Activated CD8-positive, alpha-beta T cell treated with anti-CD3 and anti-CD28 coated beads, Interleukin-2, amount 10 ng/mL, durations not matched to agents 7 days and 5 days (primary cell): ENCODE measurements at regions of chr17 and their contacts with region 1.

Region 1: DNA sequence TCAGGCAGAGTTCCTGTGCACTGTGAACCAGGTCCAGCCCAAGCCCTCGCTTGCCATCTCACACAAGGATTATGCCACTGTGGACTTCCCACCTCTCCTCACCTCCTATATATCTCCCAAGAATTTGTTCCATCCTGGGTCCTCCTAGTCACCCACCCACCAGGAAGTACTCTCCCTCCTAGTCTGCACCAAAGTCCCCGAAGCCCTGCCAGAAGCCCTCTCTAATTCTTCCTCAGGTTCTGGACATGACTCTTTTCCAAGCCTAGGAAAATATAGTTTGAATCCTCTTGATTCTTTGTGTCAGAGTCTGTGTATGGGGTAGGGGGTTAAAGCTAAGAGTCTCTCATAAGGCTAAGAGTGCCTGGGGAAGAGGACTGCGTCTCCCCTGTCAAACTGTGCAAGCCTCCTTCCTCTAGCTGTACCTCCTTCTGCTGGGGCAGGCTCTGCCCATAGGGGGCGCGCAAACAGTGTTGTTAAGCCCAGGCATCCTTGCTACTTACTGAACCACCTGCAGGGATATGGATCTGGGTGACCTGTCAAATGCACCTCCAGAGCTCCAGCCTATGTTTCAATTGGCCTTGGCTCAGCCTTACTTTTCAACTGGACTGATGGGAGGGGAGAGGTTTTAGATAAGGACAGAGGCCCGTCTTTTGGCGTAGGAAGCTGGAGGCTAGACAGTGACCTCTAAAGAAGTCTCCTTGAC is 16.6 kb upstream of the DLX4 start:
- DNase-seq: peak; percentile 89
- ATAC-seq: peak; percentile 96
- H3K4me3 Mint-ChIP-seq: no peak overlapping the region
- H3K27ac Mint-ChIP-seq: no peak overlapping the region
- H3K4me1 Mint-ChIP-seq: no peaks in the 10 kb centered on the region
- H3K27me3 Mint-ChIP-seq: peaks cover 34% of the 10 kb centered on the region

Region 2: DNA sequence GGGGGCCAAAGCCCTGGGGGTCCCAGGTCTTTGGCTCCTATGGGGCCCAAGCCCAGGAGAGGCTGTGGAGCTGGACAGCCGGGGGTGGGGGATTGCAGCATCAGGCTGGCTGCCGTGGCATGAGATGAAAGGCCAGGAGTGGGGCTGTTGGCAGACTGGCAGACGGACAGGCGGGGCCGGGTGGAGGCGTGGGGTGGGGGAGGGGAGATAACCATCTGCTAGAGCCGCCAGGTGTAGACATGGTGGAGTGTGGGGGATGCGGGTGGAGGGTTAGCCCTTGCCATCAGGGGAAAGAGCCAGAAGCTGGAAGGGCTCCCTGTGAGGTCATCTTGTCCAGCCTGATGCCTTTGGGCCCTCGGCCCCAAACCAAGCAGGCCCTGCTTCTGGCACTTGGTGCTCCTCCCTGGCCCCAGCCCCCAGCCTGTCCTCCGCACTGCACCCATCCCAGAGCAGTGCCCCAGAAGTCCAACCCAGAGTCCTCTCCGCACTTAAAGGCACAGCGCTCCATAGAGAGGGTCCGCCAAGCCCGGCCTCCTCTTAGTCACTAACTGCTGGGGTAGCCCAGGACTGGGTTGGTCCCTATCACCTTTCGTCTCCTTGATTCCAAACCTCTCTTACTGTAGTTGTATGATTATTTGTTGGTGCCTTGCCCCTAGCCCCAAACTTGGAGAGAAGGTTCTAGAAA is 16.7 kb before region 1 on chr17:
- CTCF ChIA-PET with region 1: interaction called, 36 read pairs
- POLR2A ChIA-PET with region 1: no interaction called
- DNase-seq: no peak
- ATAC-seq: no peak
- H3K4me3 Mint-ChIP-seq: no peak overlapping the region
- H3K27ac Mint-ChIP-seq: no peak overlapping the region
- H3K4me1 Mint-ChIP-seq: peaks cover 4% of the 10 kb centered on the region
- H3K27me3 Mint-ChIP-seq: peaks cover 23% of the 10 kb centered on the region

Region 3: DNA sequence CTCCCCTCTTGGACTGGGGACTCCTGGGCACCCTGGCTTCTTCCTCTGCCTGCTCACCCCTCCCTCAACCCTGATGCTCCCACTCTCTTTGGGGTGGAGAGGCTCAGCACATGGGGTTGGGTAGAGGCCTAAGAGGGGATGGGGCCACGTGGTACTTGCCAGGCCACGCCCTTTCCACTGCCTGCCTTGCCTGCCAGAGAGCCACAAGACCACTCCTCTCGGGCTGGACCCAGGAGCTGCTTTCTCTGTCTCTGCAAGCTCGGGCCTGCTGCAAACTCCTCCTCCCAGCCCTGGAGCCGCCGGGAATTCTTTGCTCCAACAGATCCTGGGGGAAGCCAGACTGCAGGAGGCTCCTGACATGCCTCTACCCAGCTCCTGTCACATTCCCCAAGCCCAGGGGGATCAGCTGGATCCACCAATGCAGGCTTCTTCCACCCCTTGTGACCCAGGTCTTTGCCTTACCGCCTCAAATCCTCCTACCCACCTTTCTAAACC is 28.4 kb after region 1 on chr17:
- CTCF ChIA-PET with region 1: interaction called, 23 read pairs
- POLR2A ChIA-PET with region 1: no interaction called
- DNase-seq: no peak
- ATAC-seq: no peak
- H3K4me3 Mint-ChIP-seq: no peak overlapping the region
- H3K27ac Mint-ChIP-seq: no peak overlapping the region
- H3K4me1 Mint-ChIP-seq: no peaks in the 10 kb centered on the region
- H3K27me3 Mint-ChIP-seq: peaks cover 28% of the 10 kb centered on the region

Region 4: DNA sequence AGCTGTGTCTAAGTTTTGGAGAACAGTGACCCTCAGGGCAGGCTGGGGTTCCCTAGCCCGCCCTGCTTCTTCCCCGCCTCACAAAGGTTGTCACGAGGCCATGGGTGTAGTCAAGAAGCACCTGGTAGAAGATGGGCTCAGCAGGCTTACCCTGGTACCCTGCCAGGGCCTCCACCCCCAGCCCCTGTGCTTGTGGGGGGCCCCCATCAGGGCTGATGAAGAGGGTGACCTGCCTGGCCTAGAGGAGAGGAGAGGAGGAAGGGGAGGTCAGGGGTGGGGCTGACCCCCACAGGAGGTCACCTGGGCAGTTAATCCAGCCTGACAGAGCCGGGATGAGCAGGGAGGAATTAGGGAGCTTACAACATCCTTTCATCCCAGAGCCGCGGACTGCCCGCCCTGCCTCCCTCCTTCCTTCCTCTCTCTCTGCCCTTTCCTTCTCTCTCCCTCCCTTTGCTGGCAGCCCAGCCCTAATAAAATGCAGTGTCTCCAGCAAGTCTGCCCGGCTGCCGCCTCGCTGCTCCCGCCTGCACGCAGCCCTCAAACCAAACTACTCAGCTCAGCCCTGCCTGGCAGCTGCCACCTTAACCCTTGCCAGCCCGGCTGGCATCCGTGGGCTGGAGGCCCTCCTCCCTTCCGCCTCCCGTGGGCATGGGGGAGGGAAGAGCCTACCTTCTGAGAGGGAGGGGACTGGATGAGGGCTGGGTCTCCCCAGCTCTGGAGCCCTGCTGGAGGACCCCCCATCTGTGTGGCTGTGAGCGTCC is 35.5 kb after region 1 on chr17:
- CTCF ChIA-PET with region 1: interaction called, 129 read pairs
- POLR2A ChIA-PET with region 1: no interaction called
- DNase-seq: no peak
- ATAC-seq: no peak
- H3K4me3 Mint-ChIP-seq: no peak overlapping the region
- H3K27ac Mint-ChIP-seq: no peak overlapping the region
- H3K4me1 Mint-ChIP-seq: peaks cover 4% of the 10 kb centered on the region
- H3K27me3 Mint-ChIP-seq: peaks cover 66% of the 10 kb centered on the region